ENCODE measurements at regions of chr16 and their contacts with region 1.

Region 1: GRCh38 chr16:81737885-81738786 is 41.0 kb upstream of the PLCG2 start:
- DNase-seq: peak; percentile 91
- ATAC-seq: peak; percentile 64
- H3K4me3 ChIP-seq: peak overlapping the region; percentile 11 to 59 (median 39)
- H3K4me3 Mint-ChIP-seq: peak overlapping the region; percentile 83
- H3K27ac ChIP-seq: peak overlapping the region; percentile 70 to 88
- H3K27ac Mint-ChIP-seq: peak overlapping the region; percentile 92
- H3K4me1 ChIP-seq: peaks cover 42 to 54% of the 10 kb centered on the region in 2 donors
- H3K4me1 Mint-ChIP-seq: peaks cover 50% of the 10 kb centered on the region
- H3K27me3 ChIP-seq: no peaks in the 10 kb centered on the region
- H3K27me3 Mint-ChIP-seq: no peaks in the 10 kb centered on the region
- CTCF ChIP-seq: peak; percentile 94

Region 2: DNA sequence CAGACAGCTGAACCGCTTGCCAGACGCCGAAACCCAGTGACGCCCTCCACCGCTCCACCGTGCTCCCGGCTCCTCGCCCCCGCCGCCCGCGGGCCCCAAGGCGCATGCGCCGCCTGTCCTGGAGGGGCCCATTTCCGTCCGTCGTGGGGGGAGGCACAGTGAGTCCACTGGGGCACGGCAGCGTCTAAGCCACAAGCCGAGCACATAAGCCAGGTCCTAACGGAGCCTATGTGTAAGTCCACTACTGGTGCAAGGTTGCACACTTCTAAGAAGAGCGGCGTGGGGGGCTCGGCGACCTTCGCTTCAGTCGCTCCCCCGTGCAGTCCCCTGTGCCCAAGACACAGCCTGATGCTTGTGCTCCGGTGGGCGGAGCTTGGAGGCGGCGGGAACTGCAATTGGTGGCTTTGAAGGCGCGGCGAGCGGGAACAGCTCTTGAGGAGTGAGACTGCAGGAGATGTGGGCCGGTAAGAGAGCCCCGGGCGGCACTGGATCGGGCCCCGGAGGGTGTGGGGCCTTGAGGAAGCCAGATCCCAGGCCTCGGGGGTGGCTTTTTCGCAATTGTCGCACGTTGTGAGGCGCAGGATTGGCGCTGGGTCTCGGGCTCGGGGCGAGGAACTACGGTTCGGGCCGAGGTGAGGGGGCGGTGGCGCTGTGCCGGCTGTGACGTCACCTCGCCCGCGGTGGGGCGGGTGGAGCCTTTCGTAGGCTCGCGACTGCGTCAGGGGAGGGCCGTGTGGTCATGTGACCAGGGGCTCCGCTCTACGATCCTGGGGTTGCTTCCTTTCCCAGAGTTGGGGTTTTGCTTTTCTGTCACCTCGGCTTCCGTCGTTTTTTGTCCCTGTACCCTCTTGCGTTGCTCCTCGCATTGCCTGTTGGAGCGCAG is 731.1 kb before region 1 on chr16 and contains the starts of genes CENPN and CMC2:
- CTCF ChIA-PET with region 1: interaction called, 5 read pairs
- POLR2A ChIA-PET with region 1: interaction called, 4 read pairs
- intact Hi-C with region 1: loop called (anchors 2 kb)
- DNase-seq: peak; percentile 100
- ATAC-seq: peak; percentile 82
- H3K4me3 ChIP-seq: peak within 1 kb of the TSS; percentile 89 to 97 (median 94)
- H3K4me3 Mint-ChIP-seq: peak within 1 kb of the TSS; percentile 99
- H3K27ac ChIP-seq: peak within 1 kb of the TSS; percentile 97 to 99
- H3K27ac Mint-ChIP-seq: peak within 1 kb of the TSS; percentile 100
- H3K4me1 ChIP-seq: peaks cover 25 to 38% of the 10 kb centered on the region in 2 donors
- H3K4me1 Mint-ChIP-seq: peaks cover 42% of the 10 kb centered on the region
- H3K27me3 ChIP-seq: no peaks in the 10 kb centered on the region
- H3K27me3 Mint-ChIP-seq: no peaks in the 10 kb centered on the region
- CTCF ChIP-seq: no peak
- total RNA-seq, gene CENPN: 3.5 and 4.0 TPM in 2 replicates
- total RNA-seq, gene CMC2: 21.4 and 25.7 TPM in 2 replicates

Region 3: DNA sequence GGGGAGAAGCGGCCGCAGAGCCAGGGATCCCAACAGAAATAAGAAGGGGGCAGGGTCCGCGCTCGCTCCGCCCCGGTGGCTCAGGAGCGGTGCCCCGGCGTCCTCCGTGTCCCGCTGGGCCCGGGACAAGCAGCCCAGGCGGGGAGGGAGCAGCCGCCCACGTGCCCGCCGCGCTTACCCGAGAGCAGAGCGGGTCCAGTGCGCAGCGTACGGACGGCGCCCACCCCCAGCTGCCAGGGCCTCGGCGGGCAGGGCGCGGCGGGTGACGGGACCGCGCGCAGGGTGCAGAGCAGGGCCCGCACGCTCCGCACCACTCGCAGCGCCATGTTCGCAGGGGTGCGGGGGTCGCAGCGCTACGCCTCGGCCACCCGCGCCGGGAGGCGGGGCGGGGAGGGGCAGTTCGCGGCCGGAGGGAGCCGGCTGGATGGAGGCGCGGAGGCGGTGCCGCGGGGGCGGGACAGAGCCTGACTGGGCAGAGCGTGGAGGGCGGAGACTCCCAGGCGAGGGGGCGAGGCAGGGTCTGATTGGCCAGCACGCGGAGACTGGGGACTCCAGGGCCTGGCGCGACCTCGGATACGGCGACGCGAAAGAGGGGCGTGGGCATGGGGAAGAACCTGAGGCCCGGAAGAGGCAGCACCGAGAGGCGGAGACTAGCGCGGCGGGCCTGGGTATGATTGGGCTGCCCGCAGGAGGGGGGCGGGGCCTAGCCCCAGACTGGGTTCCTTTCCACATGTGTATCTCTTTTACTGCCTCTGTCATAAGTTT is 642.0 kb before region 1 on chr16 and contains the start of gene GCSH:
- CTCF ChIA-PET with region 1: no interaction called
- POLR2A ChIA-PET with region 1: no interaction called
- intact Hi-C with region 1: loop called (anchors 1 kb)
- DNase-seq: peak; percentile 99
- ATAC-seq: peak; percentile 98
- H3K4me3 ChIP-seq: peak within 1 kb of the TSS; percentile 50 to 74 (median 65)
- H3K4me3 Mint-ChIP-seq: peak within 1 kb of the TSS; percentile 84
- H3K27ac ChIP-seq: peak within 1 kb of the TSS in 1 of 2 donors; percentile 62
- H3K27ac Mint-ChIP-seq: peak within 1 kb of the TSS; percentile 0
- H3K4me1 ChIP-seq: peaks cover 7 to 11% of the 10 kb centered on the region in 2 donors
- H3K4me1 Mint-ChIP-seq: peaks cover 11% of the 10 kb centered on the region
- H3K27me3 ChIP-seq: no peaks in the 10 kb centered on the region
- H3K27me3 Mint-ChIP-seq: no peaks in the 10 kb centered on the region
- CTCF ChIP-seq: no peak
- total RNA-seq, gene GCSH: 4.5 and 6.2 TPM in 2 replicates

Region 4: GRCh38 chr16:81403616-81404373 is 334.3 kb before region 1 on chr16:
- CTCF ChIA-PET with region 1: interaction called, 8 read pairs
- POLR2A ChIA-PET with region 1: no interaction called
- intact Hi-C with region 1: loop called (anchors 1 kb)
- DNase-seq: peak; percentile 89
- ATAC-seq: peak; percentile 95
- H3K4me3 ChIP-seq: peak overlapping the region in 4 of 5 experiments; percentile 16 to 45 (median 35)
- H3K4me3 Mint-ChIP-seq: peak overlapping the region; percentile 40
- H3K27ac ChIP-seq: no peak overlapping the region
- H3K27ac Mint-ChIP-seq: no peak overlapping the region
- H3K4me1 ChIP-seq: peaks cover 0 to 9% of the 10 kb centered on the region in 2 donors
- H3K4me1 Mint-ChIP-seq: peaks cover 4% of the 10 kb centered on the region
- H3K27me3 ChIP-seq: peaks cover 0 to 7% (median 0%) of the 10 kb centered on the region in 4 experiments
- H3K27me3 Mint-ChIP-seq: peaks cover 4% of the 10 kb centered on the region
- CTCF ChIP-seq: peak; percentile 97

Region 5: DNA sequence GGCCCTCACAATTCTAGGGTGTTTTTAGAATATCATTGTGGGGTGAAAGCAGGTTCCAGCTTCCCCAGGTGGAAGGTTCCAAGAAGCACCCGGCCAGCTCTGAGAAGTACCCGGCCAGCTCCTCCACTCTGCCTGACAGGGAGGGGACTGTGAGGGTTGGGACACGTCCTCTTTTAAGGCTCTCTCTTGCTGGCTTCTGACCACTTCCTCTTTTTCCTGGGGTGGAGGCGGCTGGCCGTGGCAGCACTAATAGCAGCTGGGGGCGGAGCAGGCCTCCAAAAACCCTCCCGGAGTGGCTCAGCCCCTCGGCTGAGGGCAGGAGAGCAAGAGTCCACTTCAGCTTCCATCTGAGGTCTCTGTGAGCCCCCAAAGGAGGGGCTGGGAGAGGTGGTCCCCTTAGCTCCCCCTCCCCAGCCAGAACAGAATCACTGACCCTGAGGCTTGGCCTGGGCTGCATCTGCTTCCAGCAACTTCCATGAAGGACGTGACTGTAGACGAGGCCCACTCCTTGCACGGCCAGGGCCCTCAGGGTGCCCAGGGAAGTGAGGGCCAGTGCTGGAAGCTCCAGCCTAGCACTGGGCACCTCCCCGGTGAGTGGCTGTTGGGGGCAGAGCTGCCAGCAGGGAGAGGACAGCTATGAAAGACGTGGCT is 14.2 kb after region 1 on chr16:
- CTCF ChIA-PET with region 1: interaction called, 37 read pairs
- POLR2A ChIA-PET with region 1: interaction called, 14 read pairs
- intact Hi-C with region 1: loop called (anchors 2 kb)
- DNase-seq: peak; percentile 87
- ATAC-seq: peak; percentile 96
- H3K4me3 ChIP-seq: peak overlapping the region in 4 of 5 experiments; percentile 6 to 58 (median 34)
- H3K4me3 Mint-ChIP-seq: peak overlapping the region; percentile 67
- H3K27ac ChIP-seq: peak overlapping the region; percentile 76 to 87
- H3K27ac Mint-ChIP-seq: peak overlapping the region; percentile 87
- H3K4me1 ChIP-seq: peaks cover 67 to 82% of the 10 kb centered on the region in 2 donors
- H3K4me1 Mint-ChIP-seq: peaks cover 67% of the 10 kb centered on the region
- H3K27me3 ChIP-seq: no peaks in the 10 kb centered on the region
- H3K27me3 Mint-ChIP-seq: no peaks in the 10 kb centered on the region
- CTCF ChIP-seq: no peak

Region 6: DNA sequence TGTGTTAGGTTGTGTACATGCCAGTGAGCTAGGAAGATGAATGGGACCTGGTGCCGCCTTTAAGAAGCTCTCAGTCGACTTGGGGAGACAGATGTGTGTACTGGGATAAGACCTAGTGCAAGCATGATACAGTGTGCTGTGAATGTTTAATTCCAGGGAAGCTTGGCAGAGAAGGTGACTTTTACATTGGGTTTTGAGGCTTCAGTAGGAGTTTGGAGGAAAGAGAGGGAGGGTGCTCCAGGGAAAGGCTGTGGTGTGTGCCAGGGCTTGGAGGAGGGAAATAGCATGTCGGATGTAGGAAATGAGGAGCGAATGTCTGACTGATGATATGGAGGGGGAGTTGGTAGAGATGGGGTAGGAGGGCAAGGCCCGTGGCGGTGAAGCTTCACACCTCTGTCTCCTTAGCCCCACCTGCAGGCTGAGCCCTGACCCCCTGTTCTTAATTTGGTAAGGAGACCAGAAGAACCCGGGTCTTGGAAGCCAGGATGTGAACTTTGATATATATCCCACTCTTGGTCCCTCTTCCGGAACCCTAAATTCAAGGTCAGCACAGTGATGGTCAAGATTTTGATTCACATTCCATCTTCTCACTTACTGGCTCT is 117.5 kb after region 1 on chr16:
- CTCF ChIA-PET with region 1: interaction called, 13 read pairs
- POLR2A ChIA-PET with region 1: no interaction called
- intact Hi-C with region 1: no loop called
- DNase-seq: no peak
- ATAC-seq: no peak
- H3K4me3 ChIP-seq: no peak overlapping the region
- H3K4me3 Mint-ChIP-seq: no peak overlapping the region
- H3K27ac ChIP-seq: peak overlapping the region in 1 of 2 donors; percentile 47
- H3K27ac Mint-ChIP-seq: peak overlapping the region; percentile 69
- H3K4me1 ChIP-seq: peaks cover 22 to 36% of the 10 kb centered on the region in 2 donors
- H3K4me1 Mint-ChIP-seq: peaks cover 49% of the 10 kb centered on the region
- H3K27me3 ChIP-seq: no peaks in the 10 kb centered on the region
- H3K27me3 Mint-ChIP-seq: no peaks in the 10 kb centered on the region
- CTCF ChIP-seq: no peak